IMR-90 (cell line): ENCODE measurements at regions of chr7 and their contacts with region 1.

Region 1: GRCh38 chr7:2757904-2758672 is 70.1 kb downstream of the AMZ1 start:
- DNase-seq: peak; percentile 99
- ATAC-seq: peak; percentile 82
- H3K4me3 ChIP-seq: peak overlapping the region; percentile 6; the same call in 1 of the 2 replicates
- H3K27ac ChIP-seq: peak overlapping the region; percentile 95
- H3K4me1 ChIP-seq: peaks cover 39% of the 10 kb centered on the region
- H3K27me3 ChIP-seq: no peaks in the 10 kb centered on the region
- CTCF ChIP-seq: no peak
- POLR2A ChIP-seq: no peak
- RAD21 ChIP-seq: peak; percentile 30

Region 2: DNA sequence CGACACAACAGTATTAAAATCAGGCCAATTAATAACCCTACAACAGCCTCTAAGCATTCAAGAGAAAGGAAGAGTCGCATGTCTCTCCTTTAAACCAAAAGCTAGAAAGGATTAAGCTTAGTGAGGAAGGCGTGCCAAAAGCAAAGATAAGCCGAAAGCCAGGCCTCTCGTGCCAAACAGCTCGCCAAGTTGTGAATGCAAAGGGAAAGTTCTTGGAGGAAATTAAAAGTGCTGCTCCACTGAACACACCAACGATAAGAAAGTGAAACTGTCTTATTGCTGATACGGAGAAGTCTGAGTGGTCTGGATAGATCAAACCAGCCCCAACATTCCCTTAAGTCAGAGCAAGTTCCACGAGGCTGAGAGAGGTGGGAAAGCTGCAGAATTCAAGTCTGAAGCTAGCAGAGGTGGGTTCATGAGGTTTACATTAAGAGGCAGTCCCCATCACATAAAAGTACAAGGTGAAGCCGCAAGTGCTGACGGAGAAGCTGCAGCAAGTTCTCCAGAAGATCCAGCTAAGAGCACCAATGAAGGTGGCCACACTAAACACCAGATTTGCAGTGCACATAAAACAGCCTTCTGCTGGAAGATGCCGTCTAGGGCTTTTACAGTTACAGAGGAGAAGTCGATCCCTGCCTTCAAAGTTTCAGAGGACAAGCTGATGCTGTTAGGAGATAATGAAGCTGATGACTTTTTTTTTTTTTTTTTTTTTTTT is 720.1 kb before region 1 on chr7:
- CTCF ChIA-PET with region 1: no interaction called
- POLR2A ChIA-PET with region 1: no interaction called
- dilution Hi-C with region 1: no loop called
- in situ Hi-C with region 1: no loop called
- intact Hi-C with region 1: no loop called
- DNase-seq: peak; percentile 80
- ATAC-seq: peak; percentile 81
- H3K4me3 ChIP-seq: peak overlapping the region; percentile 39
- H3K27ac ChIP-seq: peak overlapping the region; percentile 56; the same call in 1 of the 2 replicates
- H3K4me1 ChIP-seq: peaks cover 5% of the 10 kb centered on the region
- H3K27me3 ChIP-seq: no peaks in the 10 kb centered on the region
- CTCF ChIP-seq: no peak
- POLR2A ChIP-seq: peak; percentile 53; the same call in 1 of the 2 replicates
- RAD21 ChIP-seq: no peak

Region 3: DNA sequence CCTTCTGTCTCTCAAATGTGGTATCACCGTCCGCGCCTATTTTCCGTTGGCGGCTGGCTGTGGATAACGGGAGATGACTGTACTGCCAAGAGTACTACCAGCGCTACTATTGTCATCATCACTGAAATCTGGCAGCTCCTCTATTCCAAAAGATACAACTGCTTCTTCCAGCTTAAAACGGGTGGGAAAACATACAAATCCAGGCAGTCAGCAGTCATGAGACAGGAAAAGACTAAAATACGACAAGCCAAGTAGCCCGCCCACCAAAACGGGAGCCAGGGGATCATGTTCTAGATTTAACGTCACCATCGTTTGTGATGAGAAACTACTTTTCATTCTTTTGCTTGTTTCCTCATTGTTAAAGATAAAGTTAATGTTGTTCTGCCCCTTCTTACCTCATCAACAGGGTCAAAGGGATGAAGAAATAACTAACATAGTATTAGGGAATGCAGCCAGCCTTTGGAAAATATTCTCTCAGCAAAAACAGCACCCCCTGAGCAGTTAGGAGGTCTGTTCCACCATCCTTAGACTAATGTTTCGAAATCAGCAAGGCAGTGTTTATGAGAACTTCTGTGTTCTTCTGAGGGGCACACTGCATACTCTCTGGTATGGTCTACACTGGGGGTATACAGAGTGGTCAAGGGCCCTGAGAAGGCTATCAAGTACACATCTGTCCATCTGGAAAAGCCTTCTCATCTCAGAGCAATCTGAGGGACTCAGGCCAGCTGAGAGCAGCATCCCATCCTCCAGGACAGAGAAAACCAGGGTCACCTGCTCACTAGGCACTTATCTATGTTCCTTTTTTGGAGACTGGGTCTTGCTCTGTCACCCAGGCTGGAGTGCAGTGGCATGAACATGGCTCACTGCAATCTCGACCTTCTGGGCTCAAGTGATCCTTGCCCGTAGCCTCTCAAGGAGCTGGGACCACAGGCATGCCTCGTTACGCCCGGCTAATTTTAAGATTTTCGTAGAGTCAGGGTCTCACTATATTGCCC is 38.6 kb after region 1 on chr7:
- CTCF ChIA-PET with region 1: interaction called, 5 read pairs
- POLR2A ChIA-PET with region 1: no interaction called
- dilution Hi-C with region 1: no loop called
- in situ Hi-C with region 1: no loop called
- intact Hi-C with region 1: loop called (anchors 5 kb)
- DNase-seq: peak; percentile 94
- ATAC-seq: peak; percentile 76
- H3K4me3 ChIP-seq: no peak overlapping the region
- H3K27ac ChIP-seq: peak overlapping the region; percentile 90; the same call in 1 of the 2 replicates
- H3K4me1 ChIP-seq: peaks cover 16% of the 10 kb centered on the region
- H3K27me3 ChIP-seq: no peaks in the 10 kb centered on the region
- CTCF ChIP-seq: no peak
- POLR2A ChIP-seq: no peak
- RAD21 ChIP-seq: no peak

Region 4: DNA sequence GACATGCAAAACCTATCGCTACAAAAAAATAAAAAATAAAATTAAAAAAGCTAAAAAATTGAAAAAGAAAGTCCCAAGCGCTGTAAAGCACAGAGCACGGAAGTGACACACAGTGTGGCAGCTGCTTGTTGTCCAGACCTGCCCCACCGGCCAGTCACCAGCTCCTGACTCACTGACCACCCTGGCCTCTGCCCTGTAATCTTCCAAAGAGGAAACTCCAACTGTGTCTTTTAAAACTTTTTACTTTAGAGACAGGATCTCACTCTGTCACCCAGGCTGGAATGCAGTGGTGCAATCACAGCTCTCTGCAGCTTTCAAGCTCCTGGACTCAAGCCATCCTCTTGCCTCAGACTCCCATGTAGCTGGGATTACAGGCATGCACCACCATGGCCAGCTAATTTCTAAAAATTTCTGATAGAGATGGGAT is 62.4 kb after region 1 on chr7:
- CTCF ChIA-PET with region 1: no interaction called
- POLR2A ChIA-PET with region 1: no interaction called
- dilution Hi-C with region 1: no loop called
- in situ Hi-C with region 1: no loop called
- intact Hi-C with region 1: loop called (anchors 1 kb)
- DNase-seq: peak; percentile 97
- ATAC-seq: peak; percentile 62
- H3K4me3 ChIP-seq: no peak overlapping the region
- H3K27ac ChIP-seq: peak overlapping the region; percentile 95
- H3K4me1 ChIP-seq: peaks cover 52% of the 10 kb centered on the region
- H3K27me3 ChIP-seq: no peaks in the 10 kb centered on the region
- CTCF ChIP-seq: no peak
- POLR2A ChIP-seq: no peak
- RAD21 ChIP-seq: 0 out of 2 replicates have a peak, but pooled peaks have one; percentile 16

Region 5: DNA sequence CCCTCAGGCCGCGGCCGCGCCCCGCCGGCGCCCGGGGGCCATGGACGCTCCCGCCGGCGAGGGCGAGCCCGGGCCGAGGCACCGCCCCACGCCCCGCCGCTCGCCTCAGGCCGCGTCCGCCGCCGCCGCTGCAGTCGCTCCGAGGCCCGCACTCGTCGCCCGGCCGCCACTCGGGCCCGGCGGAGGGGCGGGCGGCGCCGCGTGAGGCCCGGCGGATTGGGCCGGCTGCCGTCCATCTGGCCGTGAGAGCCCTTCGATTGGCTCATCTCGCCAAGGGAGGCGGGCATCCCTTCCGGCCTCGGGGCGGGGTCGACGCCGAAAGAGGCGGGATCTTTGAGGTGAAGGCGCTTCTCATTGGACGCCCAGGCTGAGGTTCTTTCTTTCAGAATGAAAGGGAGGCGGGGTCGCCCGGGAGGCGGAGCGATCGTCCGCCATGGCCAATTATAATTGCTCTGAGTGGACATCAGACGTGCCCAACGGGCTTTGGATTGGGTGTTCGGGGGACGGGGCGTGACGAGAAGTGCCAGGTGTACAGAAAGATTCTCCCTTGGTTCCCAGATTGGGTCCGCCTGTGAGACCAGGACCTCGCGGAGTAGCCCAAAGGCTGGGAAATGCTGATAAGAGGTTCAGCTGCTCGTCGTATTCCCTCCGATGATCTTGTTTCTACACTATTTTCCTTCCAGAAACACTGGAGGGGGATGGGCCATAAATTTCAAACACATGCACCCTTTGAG is 86.2 kb after region 1 on chr7 and contains the start of gene GNA12:
- CTCF ChIA-PET with region 1: no interaction called
- POLR2A ChIA-PET with region 1: no interaction called
- dilution Hi-C with region 1: no loop called
- in situ Hi-C with region 1: no loop called
- intact Hi-C with region 1: loop called (anchors 5 kb)
- DNase-seq: peak; percentile 98
- ATAC-seq: peak; percentile 97
- H3K4me3 ChIP-seq: peak within 1 kb of the TSS; percentile 98
- H3K27ac ChIP-seq: peak within 1 kb of the TSS; percentile 86
- H3K4me1 ChIP-seq: peaks cover 12% of the 10 kb centered on the region
- H3K27me3 ChIP-seq: no peaks in the 10 kb centered on the region
- CTCF ChIP-seq: no peak
- POLR2A ChIP-seq: no peak; the same call in 1 of the 2 replicates
- RAD21 ChIP-seq: no peak
- total RNA-seq, gene GNA12: 14.3 and 14.4 TPM in 2 replicates

Region 6: DNA sequence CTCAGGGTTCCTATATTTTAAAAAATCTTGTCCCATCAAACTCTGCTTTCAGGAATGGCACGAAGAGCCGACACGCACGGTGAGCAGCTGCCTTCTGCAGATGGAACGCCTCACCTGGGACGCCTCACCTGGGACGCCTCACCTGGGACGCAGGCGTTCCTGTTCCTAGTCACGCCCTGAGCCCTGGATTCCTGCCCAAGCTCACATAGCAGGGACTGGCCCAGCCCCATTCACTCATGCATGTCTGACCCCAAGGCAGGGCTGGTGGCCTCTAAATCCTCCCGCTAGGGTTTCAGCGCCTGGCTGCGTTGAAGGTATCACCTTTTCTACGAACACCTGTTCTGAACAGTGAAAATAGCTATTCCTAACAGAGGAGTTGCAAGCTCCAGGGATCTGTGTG is 235.8 kb after region 1 on chr7:
- CTCF ChIA-PET with region 1: no interaction called
- POLR2A ChIA-PET with region 1: no interaction called
- dilution Hi-C with region 1: no loop called
- in situ Hi-C with region 1: no loop called
- intact Hi-C with region 1: no loop called
- DNase-seq: no peak
- ATAC-seq: no peak
- H3K4me3 ChIP-seq: no peak overlapping the region
- H3K27ac ChIP-seq: no peak overlapping the region
- H3K4me1 ChIP-seq: no peaks in the 10 kb centered on the region
- H3K27me3 ChIP-seq: no peaks in the 10 kb centered on the region; the same call in 1 of the 2 replicates
- CTCF ChIP-seq: no peak
- POLR2A ChIP-seq: no peak
- RAD21 ChIP-seq: no peak